H1 (cell line): ENCODE measurements at regions of chr2 and their contacts with region 1.

Region 1: GRCh38 chr2:240749516-240749915 is 57.9 kb downstream of the AQP12A start:
- DNase-seq: no peak
- H3K4me3 ChIP-seq: no peak overlapping the region
- H3K27ac ChIP-seq: no peak overlapping the region
- H3K4me1 ChIP-seq: no peaks in the 10 kb centered on the region
- H3K27me3 ChIP-seq: no peaks in the 10 kb centered on the region
- CTCF ChIP-seq: no peak
- EP300 ChIP-seq: no peak
- POLR2A ChIP-seq: no peak
- RAD21 ChIP-seq: no peak

Region 2: GRCh38 chr2:240736281-240737250 is 12.9 kb before region 1 on chr2:
- CTCF ChIA-PET with region 1: no interaction called
- POLR2A ChIA-PET with region 1: interaction called, 11 read pairs
- DNase-seq: no peak
- H3K4me3 ChIP-seq: no peak overlapping the region
- H3K27ac ChIP-seq: no peak overlapping the region
- H3K4me1 ChIP-seq: no peaks in the 10 kb centered on the region; a peak in 1 of 7 replicates
- H3K27me3 ChIP-seq: no peaks in the 10 kb centered on the region
- CTCF ChIP-seq: no peak
- EP300 ChIP-seq: no peak
- POLR2A ChIP-seq: no peak
- RAD21 ChIP-seq: no peak

Region 3: GRCh38 chr2:240765007-240765406 is 15.5 kb after region 1 on chr2:
- CTCF ChIA-PET with region 1: interaction called, 6 read pairs
- POLR2A ChIA-PET with region 1: interaction called, 21 read pairs
- DNase-seq: no peak
- H3K4me3 ChIP-seq: no peak overlapping the region
- H3K27ac ChIP-seq: no peak overlapping the region
- H3K4me1 ChIP-seq: no peaks in the 10 kb centered on the region
- H3K27me3 ChIP-seq: no peaks in the 10 kb centered on the region
- CTCF ChIP-seq: no peak
- EP300 ChIP-seq: no peak
- POLR2A ChIP-seq: no peak
- RAD21 ChIP-seq: no peak

Region 4: DNA sequence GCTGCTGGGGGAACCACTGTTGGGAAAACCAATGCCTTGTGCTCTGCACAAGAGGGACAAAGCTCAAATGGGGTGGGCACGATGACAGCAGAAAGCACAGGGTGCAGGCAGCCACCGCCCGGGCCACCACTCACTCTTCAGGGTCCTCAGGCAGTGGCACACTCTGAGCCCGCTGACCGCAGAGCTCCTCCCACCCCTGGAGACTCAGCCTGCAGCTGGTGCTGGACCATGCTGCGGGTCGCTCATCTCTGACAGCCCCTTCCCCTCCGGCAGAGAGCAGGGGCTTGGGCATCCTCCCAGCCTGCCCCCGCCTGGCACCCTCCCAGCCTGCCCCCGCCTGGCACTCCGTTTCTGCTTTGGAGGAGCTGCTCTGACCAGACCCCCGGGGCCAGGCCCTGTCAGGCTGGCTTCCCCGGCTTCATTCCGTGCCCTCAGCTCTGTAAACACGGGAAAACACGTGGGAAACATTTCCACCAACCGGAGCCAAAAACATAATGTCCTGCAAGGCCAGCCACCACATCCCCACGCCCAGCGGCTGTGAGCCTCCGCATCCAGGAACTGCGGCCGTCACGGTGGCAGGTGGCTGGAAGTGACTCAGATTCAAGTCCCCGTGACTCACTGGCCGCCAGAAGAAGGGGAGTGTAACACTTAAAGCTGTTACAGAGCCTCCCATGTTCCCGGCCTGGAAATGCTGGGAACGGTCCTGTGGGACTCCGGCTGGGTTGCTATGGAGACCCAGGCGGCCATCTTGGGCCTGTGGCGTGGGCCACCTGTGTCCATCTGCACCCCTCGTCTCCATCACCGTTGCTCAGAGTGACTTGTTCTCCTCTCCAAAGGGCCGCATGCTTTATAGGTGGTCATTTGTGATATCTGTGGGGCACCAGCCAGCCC is 242.1 kb after region 1 on chr2:
- CTCF ChIA-PET with region 1: no interaction called
- POLR2A ChIA-PET with region 1: no interaction called
- DNase-seq: peak in 1 of 2 experiments; percentile 43
- H3K4me3 ChIP-seq: no peak overlapping the region
- H3K27ac ChIP-seq: no peak overlapping the region
- H3K4me1 ChIP-seq: no peaks in the 10 kb centered on the region; a peak in 1 of 7 replicates
- H3K27me3 ChIP-seq: no peaks in the 10 kb centered on the region; a peak in 1 of 7 replicates
- CTCF ChIP-seq: no peak
- EP300 ChIP-seq: no peak
- POLR2A ChIP-seq: no peak
- RAD21 ChIP-seq: no peak

Region 5: GRCh38 chr2:241009601-241010530 is 260.4 kb after region 1 on chr2:
- CTCF ChIA-PET with region 1: no interaction called
- POLR2A ChIA-PET with region 1: no interaction called
- DNase-seq: peak in 1 of 2 experiments; percentile 76
- H3K4me3 ChIP-seq: peak overlapping the region in 1 of 4 experiments; percentile 39; a peak in 4 of 8 replicates
- H3K27ac ChIP-seq: no peak overlapping the region
- H3K4me1 ChIP-seq: peaks cover 0 to 19% (median 15%) of the 10 kb centered on the region in 4 experiments; a peak in 6 of 7 replicates
- H3K27me3 ChIP-seq: no peaks in the 10 kb centered on the region
- CTCF ChIP-seq: no peak
- EP300 ChIP-seq: no peak
- POLR2A ChIP-seq: no peak
- RAD21 ChIP-seq: 0 out of 4 replicates have a peak, but pooled peaks of 1 of the 2 experiments have one; percentile 1

Region 6: DNA sequence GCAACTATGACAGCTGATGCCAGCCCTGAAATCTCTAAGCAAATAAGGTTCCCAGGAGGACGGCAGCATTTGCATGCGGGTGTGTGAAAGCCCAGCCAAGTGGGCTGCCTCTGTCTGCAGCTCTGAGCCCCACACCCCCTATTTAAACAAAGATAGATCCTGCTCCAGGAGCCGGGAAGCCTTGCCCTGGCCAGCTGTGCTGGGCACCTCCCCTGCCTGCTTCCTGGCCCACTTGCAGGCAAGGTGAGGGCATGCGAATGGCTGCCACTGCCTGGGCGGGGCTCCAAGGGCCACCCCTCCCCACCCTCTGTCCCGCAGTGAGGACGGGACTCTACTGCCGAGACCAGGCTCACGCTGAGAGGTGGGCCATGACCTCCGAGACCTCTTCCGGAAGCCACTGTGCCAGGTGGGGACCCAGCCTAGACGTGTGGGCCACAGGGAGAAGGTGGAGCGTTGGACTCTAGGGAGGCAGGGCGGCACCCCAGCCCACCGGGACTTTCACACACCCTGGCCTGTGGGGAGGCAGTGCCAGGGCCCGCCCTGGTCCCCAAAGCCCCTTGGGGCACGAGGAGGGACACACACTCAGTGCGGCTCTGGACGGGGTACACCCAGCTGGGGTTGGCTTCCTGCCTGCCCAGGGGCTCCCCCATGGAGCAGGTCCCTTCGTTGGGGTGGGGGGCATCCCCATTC is 439.0 kb after region 1 on chr2 and contains the start of gene ANO7:
- CTCF ChIA-PET with region 1: no interaction called
- POLR2A ChIA-PET with region 1: no interaction called
- DNase-seq: no peak
- H3K4me3 ChIP-seq: no peak within 1 kb of the TSS
- H3K27ac ChIP-seq: no peak within 1 kb of the TSS
- H3K4me1 ChIP-seq: peaks cover 0 to 14% (median 7%) of the 10 kb centered on the region in 4 experiments; a peak in 6 of 7 replicates
- H3K27me3 ChIP-seq: no peaks in the 10 kb centered on the region
- CTCF ChIP-seq: no peak
- EP300 ChIP-seq: no peak
- POLR2A ChIP-seq: no peak
- RAD21 ChIP-seq: no peak
- total RNA-seq, gene ANO7: 6.5 and 6.9 TPM in 2 replicates

Region 7: GRCh38 chr2:241248897-241249296 is 499.4 kb after region 1 on chr2:
- CTCF ChIA-PET with region 1: no interaction called
- POLR2A ChIA-PET with region 1: no interaction called
- DNase-seq: no peak
- H3K4me3 ChIP-seq: no peak overlapping the region
- H3K27ac ChIP-seq: no peak overlapping the region
- H3K4me1 ChIP-seq: no peaks in the 10 kb centered on the region
- H3K27me3 ChIP-seq: no peaks in the 10 kb centered on the region
- CTCF ChIP-seq: no peak
- EP300 ChIP-seq: no peak
- POLR2A ChIP-seq: no peak
- RAD21 ChIP-seq: no peak